Transverse colon (tissue), 4 donors: ENCODE measurements at regions of chr7 and their contacts with region 1.

Region 1: DNA sequence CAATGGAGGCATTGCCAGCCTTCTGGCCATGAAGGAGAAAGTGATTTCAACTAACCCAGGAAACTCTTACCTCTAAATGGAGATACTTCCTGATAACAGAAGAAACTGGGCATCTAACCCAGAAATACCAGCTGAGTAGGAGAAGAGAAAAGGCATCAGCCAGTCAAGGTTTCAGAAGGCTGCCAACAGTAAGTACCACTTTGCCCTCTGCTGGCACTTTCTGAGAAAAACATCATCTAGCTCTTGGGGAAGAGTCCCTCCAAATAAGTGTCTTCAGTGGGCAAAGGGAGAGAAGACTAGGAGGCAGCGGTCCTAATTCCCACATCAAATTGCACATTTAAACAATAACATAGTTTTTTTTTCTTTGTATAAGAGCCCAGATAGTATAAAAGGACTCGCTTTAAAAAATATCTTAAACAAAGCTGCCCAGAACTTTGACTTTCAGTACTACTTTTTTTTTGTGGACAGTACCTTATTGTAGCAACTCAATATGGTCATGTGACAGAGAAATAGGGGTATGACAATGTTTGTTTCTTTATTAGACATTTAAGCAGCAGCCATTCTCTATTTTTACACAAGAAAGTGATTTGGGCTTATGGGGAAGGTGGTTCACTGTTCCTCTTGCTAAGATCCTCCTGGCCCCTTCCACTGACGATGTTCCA is 157.3 kb downstream of the CTTNBP2 start:
- DNase-seq: peak; percentile 35
- H3K4me3 ChIP-seq: no peak overlapping the region
- H3K27ac ChIP-seq: no peak overlapping the region
- H3K4me1 ChIP-seq: peaks cover 0 to 8% (median 2%) of the 10 kb centered on the region in 4 donors
- H3K27me3 ChIP-seq: no peaks in the 10 kb centered on the region
- CTCF ChIP-seq: peak; percentile 34 to 72 (median 50)
- EP300 ChIP-seq: no peak
- POLR2A ChIP-seq: no peak

Region 2: DNA sequence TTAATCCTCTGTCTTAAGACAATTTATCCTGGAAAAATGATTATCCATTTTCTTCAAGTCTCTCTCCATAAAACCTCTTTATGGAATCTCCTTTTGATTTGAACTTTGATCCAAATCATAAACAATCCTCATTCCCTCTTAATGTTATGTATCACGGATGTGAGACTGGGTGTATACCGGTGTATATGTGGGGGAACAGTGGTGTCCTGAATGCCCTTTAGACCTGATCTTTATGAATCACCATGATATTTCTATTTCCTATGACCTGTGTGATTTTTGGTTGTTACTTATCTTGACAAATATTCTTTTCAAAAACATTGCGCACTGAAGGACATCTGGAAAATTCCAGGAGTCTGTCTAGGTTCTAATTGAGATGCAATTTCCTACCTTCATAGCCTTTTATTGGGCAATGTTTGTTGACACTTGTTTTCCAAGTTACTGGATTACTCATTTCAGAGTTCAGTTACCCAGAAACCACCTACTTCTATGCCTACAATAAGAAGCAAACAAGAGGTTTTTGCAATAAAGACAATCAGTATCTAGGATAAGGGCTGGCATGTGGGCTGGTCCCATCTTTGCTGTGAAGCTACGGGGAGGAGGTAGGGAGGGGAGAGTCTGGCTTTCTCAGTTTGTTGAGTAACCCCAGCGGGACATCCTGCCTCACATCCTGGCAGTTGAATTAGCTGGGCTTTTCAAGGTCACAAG is 33.1 kb before region 1 on chr7:
- in situ Hi-C with region 1: no loop called
- intact Hi-C with region 1: loop called (anchors 1 kb)
- DNase-seq: peak; percentile 74
- H3K4me3 ChIP-seq: no peak overlapping the region
- H3K27ac ChIP-seq: peak overlapping the region; percentile 74 to 82 (median 80)
- H3K4me1 ChIP-seq: peaks cover 0 to 42% (median 4%) of the 10 kb centered on the region in 4 donors
- H3K27me3 ChIP-seq: no peaks in the 10 kb centered on the region
- CTCF ChIP-seq: no peak
- EP300 ChIP-seq: peak; percentile 9
- POLR2A ChIP-seq: no peak

Region 3: DNA sequence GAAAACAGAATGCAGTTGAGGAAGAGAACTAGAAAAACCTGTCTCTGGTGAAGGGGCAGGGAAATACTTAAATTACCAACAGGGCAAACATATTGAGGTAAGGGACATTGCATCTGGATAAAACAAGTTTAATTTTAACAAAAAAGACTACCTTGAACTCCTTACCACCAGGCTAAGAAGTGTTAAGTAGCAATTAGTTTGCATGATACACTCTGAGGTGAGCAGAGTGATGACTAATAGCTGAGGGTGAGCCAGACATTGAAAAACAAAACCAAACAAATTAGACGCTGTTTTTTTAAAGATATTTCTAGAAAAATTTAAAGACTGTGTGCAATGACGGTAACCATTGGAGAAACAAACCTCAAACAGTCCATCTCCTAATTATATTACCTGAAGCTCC is 614.5 kb after region 1 on chr7:
- in situ Hi-C with region 1: no loop called
- intact Hi-C with region 1: no loop called
- DNase-seq: no peak
- H3K4me3 ChIP-seq: no peak overlapping the region
- H3K27ac ChIP-seq: no peak overlapping the region
- H3K4me1 ChIP-seq: no peaks in the 10 kb centered on the region
- H3K27me3 ChIP-seq: no peaks in the 10 kb centered on the region
- CTCF ChIP-seq: no peak
- EP300 ChIP-seq: no peak
- POLR2A ChIP-seq: no peak